Activated B cell treated with CpG ODN at 0.5 μM for 24 hours (primary cell): ENCODE measurements at regions of chr11 and their contacts with region 1.

Region 1: GRCh38 chr11:96293598-96294021 is 49.4 kb downstream of the MAML2 start:
- DNase-seq: no peak
- ATAC-seq: peak; percentile 93
- H3K4me3 Mint-ChIP-seq: peak overlapping the region; percentile 62
- H3K27ac Mint-ChIP-seq: peak overlapping the region; percentile 61
- H3K4me1 Mint-ChIP-seq: peaks cover 32% of the 10 kb centered on the region
- H3K27me3 Mint-ChIP-seq: no peaks in the 10 kb centered on the region
- CTCF ChIP-seq: no peak

Region 2: DNA sequence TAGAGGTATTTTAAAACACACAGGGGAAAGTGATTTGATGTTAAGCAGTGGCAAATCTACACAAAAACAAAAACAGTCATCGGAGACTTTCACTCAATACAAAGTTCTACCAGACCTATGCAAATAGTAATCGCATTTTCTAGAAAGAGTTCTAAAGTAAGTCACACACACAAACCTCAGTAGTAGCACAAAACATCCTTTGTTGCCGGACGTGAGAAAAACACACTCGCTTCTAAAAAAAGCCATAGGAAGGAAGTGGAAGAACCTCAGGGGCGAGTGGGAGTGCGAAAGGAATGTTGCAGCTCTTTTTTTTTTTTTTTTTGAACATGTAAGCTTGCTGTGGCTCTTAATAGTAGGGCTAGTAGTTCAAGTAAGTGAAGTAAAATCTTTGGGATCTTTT is 39.5 kb before region 1 on chr11:
- CTCF ChIA-PET with region 1: no interaction called
- POLR2A ChIA-PET with region 1: no interaction called
- intact Hi-C with region 1: loop called (anchors 2 kb)
- DNase-seq: no peak
- ATAC-seq: no peak
- H3K4me3 Mint-ChIP-seq: peak overlapping the region; percentile 73
- H3K27ac Mint-ChIP-seq: peak overlapping the region; percentile 99
- H3K4me1 Mint-ChIP-seq: peaks cover 82% of the 10 kb centered on the region
- H3K27me3 Mint-ChIP-seq: no peaks in the 10 kb centered on the region
- CTCF ChIP-seq: no peak

Region 3: DNA sequence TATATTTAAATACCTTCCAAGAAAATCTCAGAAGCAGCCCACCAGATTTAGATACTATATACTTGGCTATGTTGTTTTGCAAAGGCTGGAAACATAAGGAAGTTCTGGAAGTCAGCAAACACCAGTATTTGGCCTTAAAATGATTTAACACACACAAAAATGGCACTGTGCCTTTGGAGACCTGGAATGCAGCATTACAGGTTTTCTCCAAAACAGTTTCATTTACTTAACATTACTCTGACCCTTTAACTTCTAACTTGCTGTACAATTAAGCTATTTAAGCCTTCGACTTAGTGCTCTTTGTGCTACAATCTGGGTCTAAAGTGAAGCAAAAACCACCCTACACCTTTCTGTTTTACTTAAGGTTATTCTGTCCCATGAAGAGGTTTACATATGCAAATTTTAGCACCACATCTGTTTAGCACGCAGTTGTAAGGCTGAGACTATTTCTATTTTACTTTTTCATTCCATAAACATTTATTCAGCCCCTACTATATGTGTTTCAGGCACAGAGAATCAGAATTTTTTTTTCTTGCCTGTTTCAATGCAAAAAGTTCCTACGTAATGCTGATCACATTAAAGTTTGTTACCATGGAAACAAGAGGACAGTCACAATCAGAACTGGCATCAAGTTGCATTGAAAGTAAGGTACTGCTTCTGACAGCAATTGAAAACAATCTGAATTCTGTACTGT is 20.9 kb before region 1 on chr11:
- CTCF ChIA-PET with region 1: no interaction called
- POLR2A ChIA-PET with region 1: no interaction called
- intact Hi-C with region 1: no loop called
- DNase-seq: no peak
- ATAC-seq: peak; percentile 72
- H3K4me3 Mint-ChIP-seq: no peak overlapping the region
- H3K27ac Mint-ChIP-seq: peak overlapping the region; percentile 59
- H3K4me1 Mint-ChIP-seq: peaks cover 35% of the 10 kb centered on the region
- H3K27me3 Mint-ChIP-seq: no peaks in the 10 kb centered on the region
- CTCF ChIP-seq: no peak